ENCODE measurements at regions of chr16 and their contacts with region 1.

Region 1: GRCh38 chr16:68902008-68902968 is 59.0 kb downstream of the TANGO6 start:
- DNase-seq: peak; percentile 5 to 51
- ATAC-seq: peak; percentile 90 to 92
- H3K4me3 ChIP-seq: no peak overlapping the region
- H3K27ac ChIP-seq: peak overlapping the region in 3 of 4 donors; percentile 30 to 35 (median 31)
- H3K4me1 ChIP-seq: peaks cover 9 to 11% of the 10 kb centered on the region in 2 donors
- H3K27me3 ChIP-seq: no peaks in the 10 kb centered on the region
- CTCF ChIP-seq: peak; percentile 48 to 74 (median 71)
- POLR2A ChIP-seq: no peak

Region 2: DNA sequence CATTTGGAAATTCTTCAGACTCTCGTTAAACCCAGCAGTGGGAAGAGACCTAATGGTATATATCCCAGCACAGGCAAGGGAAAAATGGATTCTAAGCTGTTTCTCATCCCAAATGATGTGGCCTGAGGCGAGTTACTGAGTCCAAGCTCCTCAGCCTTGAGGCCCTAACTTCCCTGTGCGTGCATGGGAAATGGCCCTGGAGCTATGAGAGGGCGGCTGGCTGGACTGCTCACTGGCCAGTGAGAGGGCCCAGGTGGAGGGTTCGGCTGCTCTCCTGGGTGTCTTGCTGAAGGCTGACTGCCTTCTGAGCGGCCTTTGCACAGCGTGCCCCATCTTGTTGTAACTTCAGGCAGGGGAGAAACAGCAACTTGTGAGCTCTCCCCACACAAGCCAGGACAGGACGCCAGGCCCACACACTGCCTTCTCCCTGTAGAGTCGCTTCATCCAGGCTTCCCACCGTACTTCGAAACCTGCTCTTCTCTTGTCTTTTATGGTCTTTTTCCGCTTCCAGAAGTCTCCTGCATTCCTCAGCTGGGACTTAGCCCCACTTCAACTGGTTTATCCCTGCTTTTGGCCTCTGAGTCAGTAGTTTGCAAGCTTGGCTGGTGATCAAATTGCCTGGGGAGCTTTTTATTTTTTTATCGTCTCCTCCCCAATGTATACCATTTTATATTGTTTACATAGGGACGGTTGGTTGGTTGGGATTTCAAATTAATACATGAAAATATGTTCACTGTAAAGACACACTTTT is 243.9 kb before region 1 on chr16:
- in situ Hi-C with region 1: no loop called
- intact Hi-C with region 1: no loop called
- DNase-seq: no peak
- ATAC-seq: no peak
- H3K4me3 ChIP-seq: no peak overlapping the region
- H3K27ac ChIP-seq: no peak overlapping the region
- H3K4me1 ChIP-seq: no peaks in the 10 kb centered on the region
- H3K27me3 ChIP-seq: no peaks in the 10 kb centered on the region
- CTCF ChIP-seq: no peak
- POLR2A ChIP-seq: no peak

Region 3: GRCh38 chr16:68948230-68948910 is 46.1 kb after region 1 on chr16:
- in situ Hi-C with region 1: no loop called
- intact Hi-C with region 1: no loop called
- DNase-seq: no peak
- ATAC-seq: no peak
- H3K4me3 ChIP-seq: no peak overlapping the region
- H3K27ac ChIP-seq: no peak overlapping the region
- H3K4me1 ChIP-seq: no peaks in the 10 kb centered on the region
- H3K27me3 ChIP-seq: no peaks in the 10 kb centered on the region
- CTCF ChIP-seq: no peak
- POLR2A ChIP-seq: no peak

Region 4: GRCh38 chr16:69105489-69106361 is 203.4 kb after region 1 on chr16 and contains the start of gene HAS3:
- in situ Hi-C with region 1: no loop called
- intact Hi-C with region 1: loop called (anchors 5 kb)
- DNase-seq: no peak
- ATAC-seq: peak; percentile 66 to 67
- H3K4me3 ChIP-seq: peak within 1 kb of the TSS; percentile 50 to 68 (median 56)
- H3K27ac ChIP-seq: peak within 1 kb of the TSS in 1 of 4 donors; percentile 32
- H3K4me1 ChIP-seq: peaks cover 16 to 19% of the 10 kb centered on the region in 2 donors
- H3K27me3 ChIP-seq: no peaks in the 10 kb centered on the region
- CTCF ChIP-seq: peak in 1 of 5 experiments; percentile 33
- POLR2A ChIP-seq: peak; percentile 29 to 60
- total RNA-seq, gene HAS3: 0.23 to 10.0 (median 1.6) TPM in 3 of 4 donors, not detected in the other

Region 5: DNA sequence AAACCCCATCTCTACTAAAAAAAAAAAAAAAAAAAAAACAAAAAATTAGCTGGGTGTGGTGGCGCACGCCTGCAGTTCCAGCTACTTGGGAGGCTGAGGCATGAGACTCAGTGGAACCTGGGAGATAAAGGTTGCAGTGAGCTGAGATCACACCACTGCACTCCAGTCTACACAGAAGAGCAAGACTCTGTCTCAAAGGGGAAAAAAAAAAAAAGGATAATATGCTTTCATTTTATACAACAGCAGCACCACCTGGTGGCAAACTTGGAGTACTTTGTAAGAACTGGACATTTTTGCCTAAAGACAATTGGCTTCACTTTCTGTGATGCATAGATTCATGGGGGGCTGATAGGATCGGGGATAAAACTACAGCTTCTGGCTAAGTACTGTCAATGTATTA is 221.6 kb after region 1 on chr16:
- in situ Hi-C with region 1: loop called (anchors 5 to 10 kb)
- intact Hi-C with region 1: loop called (anchors 2 kb)
- DNase-seq: no peak
- ATAC-seq: peak in 1 of 2 donors; percentile 62
- H3K4me3 ChIP-seq: no peak overlapping the region
- H3K27ac ChIP-seq: no peak overlapping the region
- H3K4me1 ChIP-seq: peaks cover 6 to 7% of the 10 kb centered on the region in 2 donors
- H3K27me3 ChIP-seq: no peaks in the 10 kb centered on the region
- CTCF ChIP-seq: peak; percentile 41 to 69 (median 65)
- POLR2A ChIP-seq: no peak

Region 6: GRCh38 chr16:69286941-69287713 is 384.8 kb after region 1 on chr16:
- in situ Hi-C with region 1: no loop called
- intact Hi-C with region 1: loop called (anchors 5 kb)
- DNase-seq: peak; percentile 76 to 93
- ATAC-seq: peak; percentile 97 to 98
- H3K4me3 ChIP-seq: no peak overlapping the region
- H3K27ac ChIP-seq: peak overlapping the region; percentile 48 to 80 (median 70)
- H3K4me1 ChIP-seq: peaks cover 7 to 9% of the 10 kb centered on the region in 2 donors
- H3K27me3 ChIP-seq: no peaks in the 10 kb centered on the region
- CTCF ChIP-seq: peak; percentile 46 to 77 (median 69)
- POLR2A ChIP-seq: no peak

Measured in gastrocnemius medialis (tissue), 4 donors.